HCT116 (cell line): ENCODE measurements at regions of chrX and their contacts with region 1.

Region 1: GRCh38 chrX:131802835-131803626 is 220.1 kb upstream of the STK26 start:
- DNase-seq: no peak
- ATAC-seq: peak; percentile 81
- H3K4me3 ChIP-seq: no peak overlapping the region
- H3K27ac ChIP-seq: no peak overlapping the region
- H3K4me1 ChIP-seq: no peaks in the 10 kb centered on the region
- H3K27me3 ChIP-seq: no peaks in the 10 kb centered on the region
- CTCF ChIP-seq: peak in 2 of 3 experiments; percentile 55 to 64; a peak in 4 of 6 replicates
- POLR2A ChIP-seq: no peak
- RAD21 ChIP-seq: 0 out of 2 replicates have a peak, but pooled peaks have one; percentile 8

Region 2: GRCh38 chrX:130975947-130976346 is 827.1 kb before region 1 on chrX:
- CTCF ChIA-PET with region 1: no interaction called
- POLR2A ChIA-PET with region 1: no interaction called
- RAD21 ChIA-PET with region 1: no interaction called
- intact Hi-C with region 1: loop called (anchors 10 kb)
- DNase-seq: peak; percentile 31
- ATAC-seq: peak; percentile 89
- H3K4me3 ChIP-seq: no peak overlapping the region
- H3K27ac ChIP-seq: no peak overlapping the region
- H3K4me1 ChIP-seq: no peaks in the 10 kb centered on the region
- H3K27me3 ChIP-seq: no peaks in the 10 kb centered on the region
- CTCF ChIP-seq: peak; percentile 40 to 65 (median 56); a peak in 5 of 6 replicates
- POLR2A ChIP-seq: no peak
- RAD21 ChIP-seq: peak; percentile 70